Activated T-helper 1 cell treated with anti-CD3 and anti-CD28 coated beads, Interleukin-12 subunit alpha, Interleukin-12 subunit beta, Interleukin-2, Interleukin-4 antibody, amounts not matched to agents 30 ng/mL and 10 ng/mL and 1 ng/mL, durations not matched to agents 14 hours and 24 hours and 36 hours (primary cell): ENCODE measurements at regions of chr19 and their contacts with region 1.

Region 1: DNA sequence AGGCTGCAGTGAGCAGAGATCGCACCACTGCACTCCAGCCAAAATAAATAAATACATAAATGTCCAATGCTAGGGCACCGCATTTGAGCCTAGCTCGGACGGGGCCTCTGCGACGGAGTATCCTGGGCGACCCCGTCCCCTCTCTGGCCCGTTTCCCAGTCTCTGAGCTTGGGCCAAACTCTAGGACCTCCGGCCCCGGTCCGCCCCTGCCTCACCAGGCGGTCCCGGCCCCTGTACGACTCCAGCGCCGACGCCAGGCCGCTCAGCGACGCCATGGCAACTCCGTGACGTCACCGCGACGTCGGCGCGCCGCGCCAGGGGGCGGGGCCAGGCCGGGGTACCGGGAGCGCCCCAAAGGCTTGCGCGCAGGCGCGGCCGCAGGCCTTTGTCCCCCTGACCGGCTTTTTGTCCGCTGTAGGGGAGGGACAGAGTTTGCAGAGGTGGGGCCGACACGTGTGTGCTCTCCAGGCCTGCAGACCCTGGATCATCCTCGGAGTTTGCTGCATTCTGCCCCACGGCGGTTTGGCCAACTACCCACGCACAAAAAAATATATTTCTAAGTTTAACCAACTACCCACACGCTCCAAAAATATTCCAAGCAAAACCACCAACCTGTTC is at the start of gene PEX11G:
- DNase-seq: peak; percentile 92
- H3K4me3 Mint-ChIP-seq: peak within 1 kb of the TSS; percentile 84
- H3K27ac Mint-ChIP-seq: peak within 1 kb of the TSS; percentile 95
- H3K4me1 Mint-ChIP-seq: peaks cover 35% of the 10 kb centered on the region
- H3K27me3 Mint-ChIP-seq: no peaks in the 10 kb centered on the region
- total RNA-seq, gene PEX11G: 1.4 and 1.5 TPM in 2 replicates

Region 2: DNA sequence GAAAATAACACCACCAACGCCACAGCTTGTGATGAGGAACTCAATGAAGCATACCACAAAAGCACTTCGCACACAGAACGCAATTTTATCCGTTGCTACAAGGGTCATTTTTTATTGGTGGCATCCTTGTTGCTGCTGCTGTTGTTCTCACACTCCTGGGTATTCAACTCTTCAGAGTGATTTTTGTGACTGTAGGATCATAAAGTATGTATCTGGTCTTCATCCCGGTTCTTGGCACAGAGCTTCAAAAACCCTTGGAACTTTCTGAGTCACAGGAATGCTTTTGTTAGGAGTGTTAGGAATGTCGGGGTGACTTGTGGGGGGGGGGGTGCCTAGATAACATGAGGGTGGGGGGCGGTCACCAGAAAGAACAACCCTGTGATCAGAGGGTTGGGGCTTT is 310.9 kb before region 1 on chr19:
- intact Hi-C with region 1: loop called (anchors 1 kb)
- DNase-seq: no peak
- H3K4me3 Mint-ChIP-seq: no peak overlapping the region
- H3K27ac Mint-ChIP-seq: no peak overlapping the region
- H3K4me1 Mint-ChIP-seq: peaks cover 18% of the 10 kb centered on the region
- H3K27me3 Mint-ChIP-seq: peaks cover 4% of the 10 kb centered on the region

Region 3: DNA sequence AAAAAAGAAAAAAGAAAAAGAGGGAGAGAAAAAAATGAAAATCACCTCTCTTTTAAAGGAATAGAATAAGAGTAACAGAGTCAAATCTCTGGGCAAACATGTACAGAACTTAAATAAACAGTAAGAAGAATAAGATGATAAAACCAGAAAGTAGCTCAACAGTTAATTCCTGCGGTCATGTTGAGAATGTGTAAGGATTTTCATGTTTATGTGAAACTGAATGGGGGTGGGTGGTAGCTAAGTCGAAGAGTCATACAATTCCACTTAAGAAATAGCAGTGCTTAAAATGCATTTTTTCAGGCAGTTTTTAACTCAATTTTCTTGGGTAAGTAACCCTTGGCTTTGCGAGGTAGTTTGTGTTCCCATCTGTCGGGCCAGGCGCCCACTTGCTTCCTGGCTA is 60.9 kb before region 1 on chr19:
- intact Hi-C with region 1: loop called (anchors 1 kb)
- DNase-seq: no peak
- H3K4me3 Mint-ChIP-seq: no peak overlapping the region
- H3K27ac Mint-ChIP-seq: peak overlapping the region; percentile 78
- H3K4me1 Mint-ChIP-seq: peaks cover 10% of the 10 kb centered on the region
- H3K27me3 Mint-ChIP-seq: no peaks in the 10 kb centered on the region

Region 4: GRCh38 chr19:7506385-7507328 is 17.8 kb after region 1 on chr19:
- intact Hi-C with region 1: loop called (anchors 1 kb)
- DNase-seq: peak; percentile 33
- H3K4me3 Mint-ChIP-seq: peak overlapping the region; percentile 26
- H3K27ac Mint-ChIP-seq: no peak overlapping the region
- H3K4me1 Mint-ChIP-seq: no peaks in the 10 kb centered on the region
- H3K27me3 Mint-ChIP-seq: peaks cover 26% of the 10 kb centered on the region

Region 5: GRCh38 chr19:7535035-7535992 is 46.5 kb after region 1 on chr19 and contains the start of gene PNPLA6:
- intact Hi-C with region 1: loop called (anchors 1 kb)
- DNase-seq: peak; percentile 91
- H3K4me3 Mint-ChIP-seq: peak within 1 kb of the TSS; percentile 95
- H3K27ac Mint-ChIP-seq: peak within 1 kb of the TSS; percentile 92
- H3K4me1 Mint-ChIP-seq: peaks cover 14% of the 10 kb centered on the region
- H3K27me3 Mint-ChIP-seq: no peaks in the 10 kb centered on the region
- total RNA-seq, gene PNPLA6: 131 and 136 TPM in 2 replicates